ENCODE measurements at regions of chr5 and their contacts with region 1.

Region 1: DNA sequence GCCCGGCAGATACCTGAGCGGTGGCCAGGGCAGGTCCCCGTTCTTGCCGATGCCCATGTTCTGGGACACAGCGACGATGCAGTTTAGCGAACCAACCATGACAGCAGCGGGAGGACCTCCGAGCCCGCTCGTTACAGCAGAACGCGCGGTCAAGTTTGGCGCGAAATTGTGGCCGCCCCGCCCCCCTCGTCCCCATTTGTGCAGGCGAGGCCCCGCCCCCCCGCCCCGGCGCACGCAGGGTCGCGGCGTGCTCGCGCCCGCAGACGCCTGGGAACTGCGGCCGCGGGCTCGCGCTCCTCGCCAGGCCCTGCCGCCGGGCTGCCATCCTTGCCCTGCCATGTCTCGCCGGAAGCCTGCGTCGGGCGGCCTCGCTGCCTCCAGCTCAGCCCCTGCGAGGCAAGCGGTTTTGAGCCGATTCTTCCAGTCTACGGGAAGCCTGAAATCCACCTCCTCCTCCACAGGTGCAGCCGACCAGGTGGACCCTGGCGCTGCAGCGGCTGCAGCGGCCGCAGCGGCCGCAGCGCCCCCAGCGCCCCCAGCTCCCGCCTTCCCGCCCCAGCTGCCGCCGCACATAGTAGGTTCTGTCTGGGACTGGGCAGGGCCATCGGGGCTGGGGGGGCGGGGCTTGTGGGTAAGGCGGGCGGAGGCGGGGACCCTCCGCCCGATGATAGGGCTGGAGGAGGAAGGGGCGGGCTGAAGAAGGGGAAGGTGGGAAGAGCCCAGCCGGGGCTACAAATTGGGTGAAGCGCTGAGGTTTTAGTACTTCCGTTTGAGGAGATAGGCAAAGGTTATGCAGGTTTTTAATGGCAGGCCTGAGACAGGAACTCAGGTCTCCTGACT is at the starts of genes DHFR and MSH3:
- DNase-seq: peak; percentile 81 to 96 (median 86)
- ATAC-seq: peak; percentile 74
- H3K4me3 ChIP-seq: peak within 1 kb of the TSS; percentile 65
- H3K4me3 Mint-ChIP-seq: peak within 1 kb of the TSS; percentile 92
- H3K27ac ChIP-seq: peak within 1 kb of the TSS; percentile 60 to 78
- H3K27ac Mint-ChIP-seq: peak within 1 kb of the TSS; percentile 95
- H3K4me1 ChIP-seq: peaks cover 20% of the 10 kb centered on the region
- H3K4me1 Mint-ChIP-seq: peaks cover 35% of the 10 kb centered on the region
- H3K27me3 ChIP-seq: no peaks in the 10 kb centered on the region
- H3K27me3 Mint-ChIP-seq: no peaks in the 10 kb centered on the region
- CTCF ChIP-seq: no peak
- total RNA-seq, gene DHFR: 3.6 to 4.0 TPM
- total RNA-seq, gene MSH3: 11.3 to 13.0 TPM

Region 2: DNA sequence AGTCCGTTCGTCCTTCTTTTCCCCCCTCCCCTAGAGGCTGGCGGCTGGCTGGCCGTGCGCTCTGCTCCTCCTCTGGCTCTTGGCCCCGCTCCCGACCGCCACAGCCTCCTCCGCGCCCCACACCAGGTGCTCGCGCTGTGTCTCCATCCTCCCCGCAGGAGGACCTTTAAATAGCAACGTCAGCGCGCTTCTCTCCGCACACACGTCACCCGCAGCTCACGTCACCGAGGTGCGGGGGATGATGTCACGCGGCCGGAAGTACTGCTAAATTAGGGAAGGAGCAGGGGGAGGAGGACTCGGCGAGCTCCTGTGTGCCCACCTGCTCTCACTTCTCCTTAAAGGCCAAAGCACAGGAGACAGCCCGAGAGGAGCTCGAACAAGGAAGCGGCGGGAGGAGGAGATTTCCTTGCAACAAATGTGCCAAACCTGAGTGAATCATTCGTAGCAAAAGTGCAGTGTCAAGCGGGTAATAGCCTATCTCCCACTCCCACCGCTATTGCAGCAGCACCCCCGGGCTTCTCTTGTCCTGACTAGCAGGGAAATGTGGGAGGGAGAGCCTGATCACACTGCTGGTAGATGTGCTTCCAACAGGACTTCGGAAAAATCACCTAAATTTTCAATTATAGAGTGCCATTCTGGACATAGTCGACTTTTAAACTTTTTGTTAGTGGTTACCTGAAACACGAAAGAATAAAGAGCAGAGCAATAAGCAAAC is 1140.1 kb before region 1 on chr5:
- CTCF ChIA-PET with region 1: no interaction called
- POLR2A ChIA-PET with region 1: no interaction called
- intact Hi-C with region 1: loop called in 1 of 2 experiments (anchors 5 kb)
- DNase-seq: peak; percentile 76 to 97 (median 87)
- ATAC-seq: peak; percentile 85
- H3K4me3 ChIP-seq: peak overlapping the region; percentile 79
- H3K4me3 Mint-ChIP-seq: peak overlapping the region; percentile 98
- H3K27ac ChIP-seq: peak overlapping the region; percentile 69 to 89
- H3K27ac Mint-ChIP-seq: peak overlapping the region; percentile 96
- H3K4me1 ChIP-seq: peaks cover 19% of the 10 kb centered on the region
- H3K4me1 Mint-ChIP-seq: peaks cover 41% of the 10 kb centered on the region
- H3K27me3 ChIP-seq: peaks cover 5 to 15% of the 10 kb centered on the region in 2 experiments
- H3K27me3 Mint-ChIP-seq: peaks cover 34% of the 10 kb centered on the region
- CTCF ChIP-seq: no peak

Region 3: DNA sequence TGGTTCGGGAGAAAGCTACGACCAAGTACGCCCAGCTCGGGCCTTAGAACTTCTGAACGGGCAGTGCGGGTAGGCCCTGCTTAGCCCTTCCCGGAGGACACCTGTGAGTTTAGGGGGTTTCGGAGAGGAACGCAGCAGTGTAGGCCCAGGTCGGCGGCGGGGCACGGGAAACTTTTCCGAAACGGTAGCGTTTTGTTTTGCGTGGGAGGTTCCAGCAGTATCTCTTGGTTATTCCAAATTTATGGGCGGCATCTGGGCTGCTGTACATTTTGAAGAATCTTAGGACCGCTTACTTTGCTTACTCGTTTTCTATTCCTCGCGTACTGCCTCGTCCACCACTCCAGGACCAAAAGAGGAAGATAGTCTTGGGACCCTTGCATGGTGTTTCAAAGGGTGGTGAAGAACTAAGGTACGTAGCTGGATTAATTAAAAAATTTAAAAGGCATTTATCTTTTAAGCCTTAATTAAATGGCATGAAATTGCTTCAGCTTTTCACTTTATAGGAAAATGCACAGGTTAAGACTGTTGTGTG is 1041.9 kb before region 1 on chr5:
- CTCF ChIA-PET with region 1: no interaction called
- POLR2A ChIA-PET with region 1: no interaction called
- intact Hi-C with region 1: loop called in 1 of 2 experiments (anchors 10 kb)
- DNase-seq: no peak
- ATAC-seq: no peak
- H3K4me3 ChIP-seq: peak overlapping the region; percentile 81
- H3K4me3 Mint-ChIP-seq: peak overlapping the region; percentile 91
- H3K27ac ChIP-seq: peak overlapping the region; percentile 76 to 90
- H3K27ac Mint-ChIP-seq: peak overlapping the region; percentile 98
- H3K4me1 ChIP-seq: peaks cover 14% of the 10 kb centered on the region
- H3K4me1 Mint-ChIP-seq: peaks cover 42% of the 10 kb centered on the region
- H3K27me3 ChIP-seq: no peaks in the 10 kb centered on the region
- H3K27me3 Mint-ChIP-seq: no peaks in the 10 kb centered on the region
- CTCF ChIP-seq: no peak

Region 4: GRCh38 chr5:79990598-79991507 is 663.8 kb before region 1 on chr5 and contains the start of gene MTX3:
- CTCF ChIA-PET with region 1: no interaction called
- POLR2A ChIA-PET with region 1: no interaction called
- intact Hi-C with region 1: loop called in 1 of 2 experiments (anchors 5 kb)
- DNase-seq: peak; percentile 75 to 94 (median 83)
- ATAC-seq: peak; percentile 95
- H3K4me3 ChIP-seq: peak within 1 kb of the TSS; percentile 85
- H3K4me3 Mint-ChIP-seq: peak within 1 kb of the TSS; percentile 88
- H3K27ac ChIP-seq: peak within 1 kb of the TSS; percentile 59 to 68
- H3K27ac Mint-ChIP-seq: peak within 1 kb of the TSS; percentile 92
- H3K4me1 ChIP-seq: peaks cover 17% of the 10 kb centered on the region
- H3K4me1 Mint-ChIP-seq: peaks cover 18% of the 10 kb centered on the region
- H3K27me3 ChIP-seq: no peaks in the 10 kb centered on the region
- H3K27me3 Mint-ChIP-seq: peaks cover 12% of the 10 kb centered on the region
- CTCF ChIP-seq: no peak
- total RNA-seq, gene MTX3: 25.6 to 26.5 TPM

Region 5: DNA sequence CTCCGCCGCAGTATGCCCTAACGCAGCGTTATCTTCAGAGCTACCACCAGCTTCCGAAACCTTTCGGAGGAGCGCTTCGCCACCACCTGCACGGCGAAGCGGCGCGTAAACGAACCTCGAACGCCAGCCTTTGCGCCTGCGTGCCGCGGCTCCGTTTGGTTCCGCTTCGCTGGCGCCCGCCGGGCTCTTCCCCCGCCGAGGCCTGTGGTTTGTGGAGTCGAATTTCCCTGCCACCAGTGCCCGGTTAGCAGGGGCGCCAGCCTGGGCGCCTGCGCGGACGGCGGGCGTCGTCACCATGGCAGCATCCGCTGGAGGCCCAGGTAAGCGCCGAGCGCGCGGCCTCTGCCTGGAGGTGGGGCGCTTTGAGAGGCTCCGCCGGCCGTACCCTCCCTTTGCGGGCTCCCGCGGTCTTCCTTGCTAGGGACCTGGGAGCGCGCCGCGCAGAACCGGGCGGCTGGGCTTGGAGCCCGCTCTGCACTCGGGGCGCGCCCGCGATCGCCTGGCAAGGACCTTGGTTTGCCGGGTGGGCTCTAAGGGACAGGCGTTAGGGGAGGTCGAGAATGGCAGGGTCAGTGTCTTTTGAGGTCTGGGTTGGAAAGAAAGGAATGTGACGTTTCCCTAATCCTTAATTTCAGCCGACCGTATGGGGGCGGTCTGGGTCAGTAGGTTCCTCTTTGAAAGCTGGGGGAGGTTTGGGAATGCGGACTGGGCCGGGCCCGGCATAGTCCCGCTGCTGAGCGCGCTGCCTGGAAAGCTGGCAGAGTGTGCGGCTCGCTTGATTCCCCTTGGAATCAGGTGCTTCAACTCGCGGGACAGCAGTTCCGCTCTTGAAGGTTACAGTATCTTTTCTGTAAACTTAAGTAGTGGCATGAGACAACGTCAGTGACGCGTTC is 166.5 kb before region 1 on chr5 and contains the start of gene FAM151B:
- CTCF ChIA-PET with region 1: no interaction called
- POLR2A ChIA-PET with region 1: interaction called, 3 read pairs
- intact Hi-C with region 1: loop called in 1 of 2 experiments (anchors 2 kb)
- DNase-seq: peak; percentile 45 to 91 (median 74)
- ATAC-seq: peak; percentile 88
- H3K4me3 ChIP-seq: peak within 1 kb of the TSS; percentile 58
- H3K4me3 Mint-ChIP-seq: peak within 1 kb of the TSS; percentile 88
- H3K27ac ChIP-seq: no peak within 1 kb of the TSS
- H3K27ac Mint-ChIP-seq: peak within 1 kb of the TSS; percentile 87
- H3K4me1 ChIP-seq: peaks cover 16% of the 10 kb centered on the region
- H3K4me1 Mint-ChIP-seq: peaks cover 21% of the 10 kb centered on the region
- H3K27me3 ChIP-seq: no peaks in the 10 kb centered on the region
- H3K27me3 Mint-ChIP-seq: no peaks in the 10 kb centered on the region
- CTCF ChIP-seq: no peak
- total RNA-seq, gene FAM151B: 0.33 to 0.61 TPM

Region 6: GRCh38 chr5:80672140-80672736 is 17.6 kb after region 1 on chr5:
- CTCF ChIA-PET with region 1: interaction called, 16 read pairs
- POLR2A ChIA-PET with region 1: interaction called, 11 read pairs
- intact Hi-C with region 1: no loop called
- DNase-seq: peak; percentile 33 to 79 (median 56)
- ATAC-seq: peak; percentile 85
- H3K4me3 ChIP-seq: no peak overlapping the region
- H3K4me3 Mint-ChIP-seq: no peak overlapping the region
- H3K27ac ChIP-seq: no peak overlapping the region
- H3K27ac Mint-ChIP-seq: no peak overlapping the region
- H3K4me1 ChIP-seq: peaks cover 7% of the 10 kb centered on the region
- H3K4me1 Mint-ChIP-seq: peaks cover 9% of the 10 kb centered on the region
- H3K27me3 ChIP-seq: no peaks in the 10 kb centered on the region
- H3K27me3 Mint-ChIP-seq: no peaks in the 10 kb centered on the region
- CTCF ChIP-seq: peak; percentile 86

Region 7: GRCh38 chr5:82278095-82278918 is 1623.7 kb after region 1 on chr5 and contains the start of gene RPS23:
- CTCF ChIA-PET with region 1: no interaction called
- POLR2A ChIA-PET with region 1: no interaction called
- intact Hi-C with region 1: loop called in 1 of 2 experiments (anchors 5 kb)
- DNase-seq: peak; percentile 77 to 93 (median 84)
- ATAC-seq: peak; percentile 92
- H3K4me3 ChIP-seq: peak within 1 kb of the TSS; percentile 78
- H3K4me3 Mint-ChIP-seq: peak within 1 kb of the TSS; percentile 94
- H3K27ac ChIP-seq: peak within 1 kb of the TSS; percentile 62 to 63
- H3K27ac Mint-ChIP-seq: peak within 1 kb of the TSS; percentile 94
- H3K4me1 ChIP-seq: peaks cover 18% of the 10 kb centered on the region
- H3K4me1 Mint-ChIP-seq: peaks cover 29% of the 10 kb centered on the region
- H3K27me3 ChIP-seq: no peaks in the 10 kb centered on the region
- H3K27me3 Mint-ChIP-seq: no peaks in the 10 kb centered on the region
- CTCF ChIP-seq: no peak
- total RNA-seq, gene RPS23: 4,190 to 4,212 TPM

Measured in CD4-positive, alpha-beta T cell (primary cell).